PC-9 (cell line): ENCODE measurements at regions of chr2 and their contacts with region 1.

Region 1: DNA sequence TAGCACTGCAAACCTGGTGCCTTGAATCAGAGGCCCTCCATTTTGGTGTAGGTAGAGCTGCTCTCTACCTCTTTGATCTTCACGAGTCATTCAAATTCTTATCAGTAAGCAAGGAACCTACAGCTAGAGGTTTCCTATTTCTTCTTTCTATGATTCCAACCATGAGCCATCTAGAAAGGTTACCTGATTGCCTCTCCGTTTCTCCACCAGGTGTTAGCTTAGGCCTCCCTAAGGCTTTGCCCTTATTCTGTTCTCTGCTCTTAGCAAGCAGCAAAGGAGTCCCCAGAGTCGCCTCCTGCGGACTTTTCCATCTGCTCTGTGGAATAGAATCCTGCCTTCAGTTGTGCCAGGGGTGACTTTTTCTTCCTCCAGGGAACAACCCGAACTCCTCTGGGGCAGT is 173.6 kb downstream of the GRB14 start:
- DNase-seq: no peak
- H3K4me3 ChIP-seq: no peak overlapping the region
- H3K27ac ChIP-seq: no peak overlapping the region
- H3K4me1 ChIP-seq: no peaks in the 10 kb centered on the region
- H3K27me3 ChIP-seq: no peaks in the 10 kb centered on the region
- CTCF ChIP-seq: no peak

Region 2: GRCh38 chr2:162840621-162841246 is 1606.9 kb before region 1 on chr2:
- CTCF ChIA-PET with region 1: no interaction called
- POLR2A ChIA-PET with region 1: interaction called, 11 read pairs
- intact Hi-C with region 1: no loop called
- DNase-seq: peak in 1 of 2 experiments; percentile 59
- H3K4me3 ChIP-seq: no peak overlapping the region
- H3K27ac ChIP-seq: no peak overlapping the region
- H3K4me1 ChIP-seq: no peaks in the 10 kb centered on the region
- H3K27me3 ChIP-seq: 0 out of 2 replicates have a peak, but pooled peaks cover 3% of the 10 kb centered on the region
- CTCF ChIP-seq: no peak

Region 3: DNA sequence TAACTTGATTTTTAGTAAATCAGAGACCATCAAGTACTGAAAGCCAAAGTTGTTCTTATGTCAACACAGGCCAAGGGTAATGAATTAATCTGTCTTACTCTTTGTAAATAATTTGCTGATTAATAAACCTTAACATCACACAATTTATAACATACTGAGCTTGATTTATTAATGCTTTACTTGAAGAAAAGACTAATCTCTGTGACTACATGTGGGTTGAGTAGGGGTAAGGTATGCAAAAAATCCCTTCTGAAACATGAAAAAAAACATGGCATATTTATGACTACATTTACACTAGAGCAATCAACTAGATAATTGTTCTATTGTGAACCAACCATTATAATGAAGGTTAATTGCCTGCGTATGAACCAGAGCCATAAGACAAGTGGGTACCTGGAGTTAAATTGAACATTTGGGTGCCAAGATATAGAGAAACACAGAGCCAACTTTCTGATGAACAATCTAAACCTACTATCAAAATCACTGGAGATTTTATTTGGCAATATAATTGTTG is 241.3 kb after region 1 on chr2:
- CTCF ChIA-PET with region 1: no interaction called
- POLR2A ChIA-PET with region 1: no interaction called
- intact Hi-C with region 1: no loop called
- DNase-seq: no peak
- H3K4me3 ChIP-seq: no peak overlapping the region
- H3K27ac ChIP-seq: no peak overlapping the region
- H3K4me1 ChIP-seq: no peaks in the 10 kb centered on the region
- H3K27me3 ChIP-seq: no peaks in the 10 kb centered on the region
- CTCF ChIP-seq: no peak